WTC11 (cell line): ENCODE measurements at regions of chr4 and their contacts with region 1.

Region 1: GRCh38 chr4:112523764-112524505 is 8.0 kb upstream of the NEUROG2 start:
- DNase-seq: peak; percentile 96
- ATAC-seq: peak; percentile 87
- H3K4me3 Mint-ChIP-seq: peak overlapping the region; percentile 85
- H3K27ac Mint-ChIP-seq: no peak overlapping the region
- H3K4me1 Mint-ChIP-seq: peaks cover 43% of the 10 kb centered on the region
- H3K27me3 Mint-ChIP-seq: peaks cover 69% of the 10 kb centered on the region
- CTCF ChIP-seq: peak; percentile 85

Region 2: GRCh38 chr4:112099701-112100297 is 424.1 kb before region 1 on chr4:
- CTCF ChIA-PET with region 1: interaction called, 11 read pairs
- POLR2A ChIA-PET with region 1: no interaction called
- DNase-seq: no peak
- ATAC-seq: peak; percentile 92
- H3K4me3 Mint-ChIP-seq: no peak overlapping the region
- H3K27ac Mint-ChIP-seq: peak overlapping the region; percentile 17; the same call in 1 of the 2 replicates
- H3K4me1 Mint-ChIP-seq: peaks cover 3% of the 10 kb centered on the region; the same call in 1 of the 2 replicates
- H3K27me3 Mint-ChIP-seq: no peaks in the 10 kb centered on the region; the same call in 1 of the 2 replicates
- CTCF ChIP-seq: peak; percentile 24; the same call in 1 of the 2 replicates

Region 3: GRCh38 chr4:112327965-112328733 is 195.8 kb before region 1 on chr4:
- CTCF ChIA-PET with region 1: interaction called, 36 read pairs
- POLR2A ChIA-PET with region 1: no interaction called
- DNase-seq: no peak
- ATAC-seq: peak; percentile 46
- H3K4me3 Mint-ChIP-seq: no peak overlapping the region
- H3K27ac Mint-ChIP-seq: no peak overlapping the region
- H3K4me1 Mint-ChIP-seq: no peaks in the 10 kb centered on the region
- H3K27me3 Mint-ChIP-seq: peaks cover 9% of the 10 kb centered on the region
- CTCF ChIP-seq: peak; percentile 36; the same call in 1 of the 2 replicates

Region 4: DNA sequence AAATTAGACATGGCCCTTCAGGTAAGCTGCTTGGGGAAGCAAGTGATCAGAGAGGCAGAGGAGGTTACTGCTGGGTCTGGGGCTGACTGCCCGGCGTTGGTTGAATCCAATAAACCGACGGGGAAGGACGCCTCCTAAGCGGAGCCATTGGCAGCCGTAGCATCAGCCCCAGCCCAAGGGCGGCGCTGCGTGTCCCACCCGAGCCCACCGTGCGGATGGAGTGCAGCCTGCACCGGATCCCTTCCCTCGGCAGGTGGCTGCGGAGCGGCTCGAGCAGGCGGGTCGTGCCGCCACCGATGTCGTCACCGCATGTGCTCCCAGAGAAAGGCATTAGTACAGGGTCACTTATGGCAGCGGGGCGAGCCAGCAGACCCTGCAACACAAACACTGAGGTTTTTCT is 144.6 kb before region 1 on chr4:
- CTCF ChIA-PET with region 1: interaction called, 11 read pairs
- POLR2A ChIA-PET with region 1: interaction called, 4 read pairs
- DNase-seq: peak; percentile 91
- ATAC-seq: peak; percentile 100
- H3K4me3 Mint-ChIP-seq: peak overlapping the region; percentile 59
- H3K27ac Mint-ChIP-seq: no peak overlapping the region
- H3K4me1 Mint-ChIP-seq: peaks cover 8% of the 10 kb centered on the region
- H3K27me3 Mint-ChIP-seq: peaks cover 39% of the 10 kb centered on the region
- CTCF ChIP-seq: no peak

Region 5: GRCh38 chr4:112472318-112472717 is 51.6 kb before region 1 on chr4:
- CTCF ChIA-PET with region 1: no interaction called
- POLR2A ChIA-PET with region 1: no interaction called
- DNase-seq: no peak
- ATAC-seq: no peak
- H3K4me3 Mint-ChIP-seq: no peak overlapping the region
- H3K27ac Mint-ChIP-seq: no peak overlapping the region
- H3K4me1 Mint-ChIP-seq: 0 out of 2 replicates have a peak, but pooled peaks cover 4% of the 10 kb centered on the region
- H3K27me3 Mint-ChIP-seq: peaks cover 3% of the 10 kb centered on the region; the same call in 1 of the 2 replicates
- CTCF ChIP-seq: no peak

Region 6: GRCh38 chr4:112502871-112503270 is 21.1 kb before region 1 on chr4:
- CTCF ChIA-PET with region 1: interaction called, 91 read pairs
- POLR2A ChIA-PET with region 1: no interaction called
- DNase-seq: no peak
- ATAC-seq: no peak
- H3K4me3 Mint-ChIP-seq: no peak overlapping the region
- H3K27ac Mint-ChIP-seq: no peak overlapping the region
- H3K4me1 Mint-ChIP-seq: no peaks in the 10 kb centered on the region
- H3K27me3 Mint-ChIP-seq: peaks cover 47% of the 10 kb centered on the region
- CTCF ChIP-seq: no peak

Region 7: GRCh38 chr4:112765317-112765975 is 241.5 kb after region 1 on chr4:
- CTCF ChIA-PET with region 1: interaction called, 12 read pairs
- POLR2A ChIA-PET with region 1: no interaction called
- DNase-seq: no peak
- ATAC-seq: peak; percentile 78
- H3K4me3 Mint-ChIP-seq: peak overlapping the region; percentile 47
- H3K27ac Mint-ChIP-seq: peak overlapping the region; percentile 95
- H3K4me1 Mint-ChIP-seq: peaks cover 38% of the 10 kb centered on the region
- H3K27me3 Mint-ChIP-seq: no peaks in the 10 kb centered on the region
- CTCF ChIP-seq: peak; percentile 68